Aorta (tissue), 5 donors: ENCODE measurements at regions of chr6 and their contacts with region 1.

Region 1: DNA sequence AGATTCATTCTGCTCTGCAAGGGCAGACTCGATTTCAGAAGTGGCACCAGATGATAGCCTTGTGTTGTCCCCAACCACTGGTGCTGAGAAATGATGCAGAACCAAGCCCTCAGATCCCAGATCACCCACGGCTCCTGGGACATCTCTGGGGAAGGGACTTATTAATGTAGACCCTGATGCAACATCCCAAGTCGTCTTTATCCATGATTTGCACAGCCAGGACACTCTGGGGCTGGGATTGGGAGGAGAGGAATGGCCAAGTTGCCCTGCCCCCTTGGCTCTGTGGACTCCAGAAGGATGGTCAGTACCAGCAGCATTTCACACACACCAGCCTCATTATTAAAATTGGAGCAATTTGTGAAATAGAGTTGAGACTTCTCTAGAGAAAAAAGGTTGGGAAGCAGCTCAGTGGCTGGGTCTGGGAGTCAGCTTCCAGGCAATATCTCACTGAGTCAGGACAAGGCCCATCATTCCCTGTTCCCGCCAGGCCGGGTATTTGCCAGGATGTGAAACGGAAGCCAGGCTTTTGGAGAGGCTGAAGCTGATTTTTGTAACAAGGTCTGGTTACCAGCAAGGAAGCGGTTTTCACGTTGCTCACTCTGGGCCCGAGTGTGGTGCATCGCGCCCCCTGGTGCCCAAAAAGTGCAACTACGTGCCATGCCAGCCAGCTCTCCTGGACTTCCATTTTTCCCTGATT is 67.4 kb downstream of the ZBTB2 start:
- DNase-seq: peak; percentile 89 to 95
- ATAC-seq: peak; percentile 94
- H3K4me3 ChIP-seq: no peak overlapping the region
- H3K27ac ChIP-seq: no peak overlapping the region
- H3K4me1 ChIP-seq: peaks cover 0 to 7% of the 10 kb centered on the region in 2 donors
- H3K27me3 ChIP-seq: no peaks in the 10 kb centered on the region

Region 2: DNA sequence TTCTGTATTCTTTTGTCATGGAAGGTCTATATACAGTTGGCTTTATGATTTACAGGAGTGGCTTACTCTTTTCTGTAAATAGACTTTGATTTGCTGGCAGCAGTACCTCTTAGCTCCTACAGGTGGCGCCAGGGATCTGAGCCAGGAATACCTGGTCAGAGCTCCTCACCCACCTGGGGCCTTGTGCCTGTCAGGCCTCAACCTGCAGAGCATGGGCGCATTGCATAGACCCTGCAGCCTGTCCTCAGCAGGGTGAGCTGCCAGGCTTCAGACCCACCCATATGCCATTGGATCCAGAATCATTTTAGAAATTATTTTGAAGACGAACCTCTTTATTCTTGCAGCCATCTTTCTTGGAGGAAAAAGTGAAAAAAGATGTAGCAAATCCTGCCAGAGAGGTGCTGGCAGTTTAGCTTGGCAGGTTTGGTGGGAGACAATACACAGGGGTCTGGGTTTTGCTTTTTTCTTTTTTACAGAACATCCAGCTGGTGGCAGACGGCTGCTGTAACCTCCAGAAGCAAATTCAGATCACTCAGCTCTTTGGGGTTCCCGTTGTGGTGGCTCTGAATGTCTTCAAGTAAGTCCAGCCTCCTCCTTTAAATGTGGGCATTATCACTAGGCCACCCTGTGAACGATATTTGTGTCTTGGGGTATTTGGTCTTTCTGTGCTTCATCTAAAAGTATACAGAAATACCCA is 309.4 kb before region 1 on chr6:
- intact Hi-C with region 1: loop called (anchors 1 to 2 kb)
- DNase-seq: peak; percentile 62 to 81
- ATAC-seq: peak; percentile 88
- H3K4me3 ChIP-seq: no peak overlapping the region
- H3K27ac ChIP-seq: no peak overlapping the region
- H3K4me1 ChIP-seq: no peaks in the 10 kb centered on the region
- H3K27me3 ChIP-seq: no peaks in the 10 kb centered on the region

Region 3: GRCh38 chr6:151240036-151240685 is 83.8 kb before region 1 on chr6:
- intact Hi-C with region 1: loop called in 1 of 2 experiments (anchors 5 kb)
- DNase-seq: peak; percentile 88 to 91
- ATAC-seq: peak; percentile 91
- H3K4me3 ChIP-seq: peak overlapping the region; percentile 58 to 90
- H3K27ac ChIP-seq: peak overlapping the region; percentile 23 to 76
- H3K4me1 ChIP-seq: no peaks in the 10 kb centered on the region
- H3K27me3 ChIP-seq: no peaks in the 10 kb centered on the region

Region 4: GRCh38 chr6:151276112-151276745 is 47.7 kb before region 1 on chr6:
- intact Hi-C with region 1: no loop called
- DNase-seq: peak in 1 of 2 donors; percentile 81
- ATAC-seq: peak; percentile 64
- H3K4me3 ChIP-seq: no peak overlapping the region
- H3K27ac ChIP-seq: no peak overlapping the region
- H3K4me1 ChIP-seq: no peaks in the 10 kb centered on the region
- H3K27me3 ChIP-seq: no peaks in the 10 kb centered on the region

Region 5: DNA sequence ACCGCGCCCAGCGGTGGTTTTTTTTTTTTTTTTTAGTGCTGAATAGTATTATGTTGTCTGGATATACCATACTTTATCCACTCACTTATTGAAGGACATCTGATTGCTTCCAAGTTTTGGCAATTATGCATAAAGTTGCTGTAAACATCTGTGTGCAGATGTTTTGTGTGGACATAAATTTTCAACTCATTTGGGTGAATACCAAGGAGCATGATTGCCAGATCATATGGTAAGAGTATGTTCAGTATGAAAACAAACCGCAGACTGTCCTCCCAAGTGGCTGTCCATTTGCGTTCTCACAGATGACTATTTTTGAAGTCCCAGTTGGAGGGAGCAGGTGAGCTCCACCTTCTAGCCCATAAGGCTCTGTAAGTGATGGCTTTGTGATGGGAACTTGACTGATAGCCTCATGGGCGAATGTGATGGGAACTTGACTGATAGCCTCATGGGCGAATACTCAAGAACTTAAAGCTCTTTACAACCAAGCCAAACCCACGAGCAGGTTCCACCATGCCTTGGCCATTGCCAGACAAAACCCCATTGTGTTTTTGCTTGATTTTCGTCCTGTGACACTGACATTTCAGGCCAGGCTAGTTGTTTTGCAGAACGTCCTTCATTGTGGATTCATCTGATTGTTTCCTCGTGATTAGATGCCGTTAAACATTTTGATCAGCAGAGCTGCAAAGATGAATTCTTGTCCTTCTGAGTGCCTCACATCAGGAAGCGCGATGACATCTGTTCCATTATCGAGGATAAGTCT is 16.5 kb after region 1 on chr6:
- intact Hi-C with region 1: no loop called
- DNase-seq: no peak
- ATAC-seq: no peak
- H3K4me3 ChIP-seq: no peak overlapping the region
- H3K27ac ChIP-seq: no peak overlapping the region
- H3K4me1 ChIP-seq: no peaks in the 10 kb centered on the region
- H3K27me3 ChIP-seq: no peaks in the 10 kb centered on the region